Activated CD4-positive, alpha-beta T cell treated with anti-CD3 and anti-CD28 coated beads for 36 hours (primary cell): ENCODE measurements at regions of chr2 and their contacts with region 1.

Region 1: DNA sequence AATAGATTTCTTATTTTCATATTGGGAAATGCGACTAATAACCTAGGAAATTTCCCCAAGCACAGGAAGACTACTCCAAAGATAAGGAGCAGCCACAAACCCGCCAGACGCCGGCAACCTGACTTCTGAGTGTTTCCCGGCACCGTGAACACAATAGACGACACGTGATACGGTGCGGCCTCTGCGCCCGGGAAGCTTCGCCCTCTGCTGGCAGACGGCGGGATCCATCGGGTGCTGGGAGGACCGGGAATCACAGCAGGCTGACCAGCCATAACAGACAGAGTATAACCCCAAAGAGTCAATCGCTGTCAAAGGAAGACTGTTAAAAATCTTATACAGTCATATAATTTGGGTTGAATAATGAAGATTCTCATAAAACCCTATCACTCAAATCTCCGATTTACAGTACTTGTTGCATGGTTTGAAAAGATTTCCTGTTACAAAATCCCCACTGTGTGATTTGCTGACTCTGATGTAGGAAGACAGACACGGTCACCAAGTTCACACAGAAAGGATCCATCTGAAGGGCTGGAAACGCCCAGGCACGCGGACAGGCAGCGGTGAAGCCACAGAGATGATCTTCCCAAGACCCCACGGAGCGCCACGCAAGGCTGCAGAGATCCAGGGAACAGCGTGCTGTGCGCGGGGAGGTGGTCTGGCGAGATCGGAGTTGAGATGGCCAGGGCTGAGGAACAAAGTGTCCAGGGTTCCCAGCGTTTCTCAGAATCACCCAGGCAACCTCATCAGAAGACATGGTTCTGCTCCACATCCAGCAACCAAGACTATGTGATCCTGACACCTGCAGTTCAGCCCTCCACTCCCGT is 73.8 kb downstream of the EIPR1 start:
- DNase-seq: peak; percentile 90
- ATAC-seq: peak; percentile 100
- H3K4me3 Mint-ChIP-seq: no peak overlapping the region
- H3K27ac Mint-ChIP-seq: peak overlapping the region; percentile 64
- H3K4me1 Mint-ChIP-seq: peaks cover 8% of the 10 kb centered on the region
- H3K27me3 Mint-ChIP-seq: no peaks in the 10 kb centered on the region

Region 2: DNA sequence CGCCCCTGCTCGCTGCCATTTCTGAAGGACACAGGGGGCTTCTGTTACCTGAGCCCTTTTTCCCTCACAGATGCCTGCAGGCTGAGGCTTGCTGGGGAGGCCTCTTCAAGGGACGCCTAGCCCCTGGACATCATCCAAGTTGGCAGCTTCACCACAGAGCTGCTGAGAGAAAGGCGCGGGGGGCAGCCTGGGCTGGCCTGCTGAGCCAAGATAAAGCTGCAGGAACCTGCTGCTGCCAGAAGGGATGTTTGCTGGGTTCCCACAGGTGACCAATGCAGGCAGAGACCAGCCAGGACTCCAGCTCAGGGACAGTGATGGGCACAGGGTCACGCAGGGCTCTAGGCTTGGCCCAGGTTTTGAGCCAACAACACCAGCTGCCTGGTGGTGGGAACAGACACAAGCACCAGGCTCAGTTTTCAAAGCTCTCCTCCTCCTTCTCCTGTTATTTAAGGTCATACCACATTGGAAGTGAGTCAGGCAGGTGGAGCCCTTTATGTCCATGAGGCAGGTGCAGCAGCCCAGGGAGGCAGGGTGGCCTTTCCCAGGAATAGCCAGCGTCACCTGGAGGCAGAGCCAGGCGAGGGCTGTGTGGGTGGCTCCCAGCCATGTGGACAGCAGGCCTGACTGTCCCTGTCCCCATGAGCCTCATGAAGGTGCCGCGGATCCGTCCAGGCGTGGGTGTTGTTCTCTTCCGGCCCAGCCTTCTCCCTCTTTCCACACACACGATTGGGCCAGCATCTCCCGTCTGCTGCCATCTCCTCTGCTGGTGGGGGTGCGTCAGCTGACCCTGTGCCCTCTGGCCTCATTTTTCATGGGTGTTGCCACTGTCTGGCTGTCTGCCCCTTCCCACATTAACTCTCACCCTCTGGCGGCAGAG is 457.2 kb before region 1 on chr2:
- CTCF ChIA-PET with region 1: no interaction called
- POLR2A ChIA-PET with region 1: no interaction called
- intact Hi-C with region 1: loop called in 1 of 2 experiments (anchors 10 kb)
- DNase-seq: no peak
- ATAC-seq: no peak
- H3K4me3 Mint-ChIP-seq: no peak overlapping the region
- H3K27ac Mint-ChIP-seq: no peak overlapping the region
- H3K4me1 Mint-ChIP-seq: no peaks in the 10 kb centered on the region
- H3K27me3 Mint-ChIP-seq: no peaks in the 10 kb centered on the region

Region 3: DNA sequence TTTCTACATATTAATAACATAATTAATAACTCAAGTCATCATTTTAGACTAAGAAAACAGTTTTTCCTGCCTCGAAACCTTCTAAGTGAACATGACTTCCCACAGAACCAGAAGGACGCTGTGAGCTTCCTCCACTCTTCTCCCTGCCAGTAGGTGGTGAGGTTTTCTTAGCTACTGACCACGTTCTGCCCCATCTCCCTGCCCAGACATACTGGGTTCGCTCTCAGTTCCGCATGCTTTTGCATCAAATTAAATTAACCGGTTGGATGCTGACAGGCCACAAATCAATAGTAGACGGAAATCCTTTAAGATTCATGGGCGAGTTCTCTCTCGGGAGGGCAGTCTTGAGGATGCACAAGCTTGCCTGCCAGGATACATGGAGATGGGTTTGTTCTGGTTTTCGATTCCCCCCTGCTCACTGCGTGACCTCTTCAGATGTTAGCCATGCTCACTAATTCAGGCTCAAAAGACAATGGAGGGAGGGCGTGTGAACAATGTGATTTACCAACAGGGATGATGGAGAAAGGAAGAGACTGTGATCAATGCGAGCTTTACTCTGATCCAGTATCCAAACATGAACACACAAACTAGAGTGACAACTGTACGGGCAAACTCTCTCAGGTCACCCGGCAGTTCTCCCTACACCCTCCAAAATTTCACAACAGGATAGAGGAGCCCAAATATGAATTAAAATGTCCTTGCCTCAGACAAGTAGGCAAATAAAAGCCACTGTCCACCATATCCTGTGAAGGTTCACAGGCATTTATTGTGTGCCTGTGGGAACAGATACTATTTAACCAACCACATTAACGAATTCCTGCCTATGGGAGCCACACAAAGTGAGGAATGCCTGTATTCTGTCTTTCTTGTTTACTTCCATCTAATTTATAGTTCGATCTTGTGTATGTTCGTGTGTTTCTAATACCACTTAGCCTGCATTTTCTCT is 301.9 kb before region 1 on chr2:
- CTCF ChIA-PET with region 1: interaction called, 3 read pairs
- POLR2A ChIA-PET with region 1: no interaction called
- intact Hi-C with region 1: loop called in 1 of 2 experiments (anchors 5 kb)
- DNase-seq: no peak
- ATAC-seq: no peak
- H3K4me3 Mint-ChIP-seq: no peak overlapping the region
- H3K27ac Mint-ChIP-seq: no peak overlapping the region
- H3K4me1 Mint-ChIP-seq: peaks cover 4% of the 10 kb centered on the region
- H3K27me3 Mint-ChIP-seq: peaks cover 16% of the 10 kb centered on the region

Region 4: GRCh38 chr2:3179208-3179607 is 124.6 kb before region 1 on chr2:
- CTCF ChIA-PET with region 1: no interaction called
- POLR2A ChIA-PET with region 1: no interaction called
- intact Hi-C with region 1: loop called (anchors 1 kb)
- DNase-seq: peak; percentile 66
- ATAC-seq: peak; percentile 65
- H3K4me3 Mint-ChIP-seq: no peak overlapping the region
- H3K27ac Mint-ChIP-seq: no peak overlapping the region
- H3K4me1 Mint-ChIP-seq: no peaks in the 10 kb centered on the region
- H3K27me3 Mint-ChIP-seq: no peaks in the 10 kb centered on the region

Region 5: DNA sequence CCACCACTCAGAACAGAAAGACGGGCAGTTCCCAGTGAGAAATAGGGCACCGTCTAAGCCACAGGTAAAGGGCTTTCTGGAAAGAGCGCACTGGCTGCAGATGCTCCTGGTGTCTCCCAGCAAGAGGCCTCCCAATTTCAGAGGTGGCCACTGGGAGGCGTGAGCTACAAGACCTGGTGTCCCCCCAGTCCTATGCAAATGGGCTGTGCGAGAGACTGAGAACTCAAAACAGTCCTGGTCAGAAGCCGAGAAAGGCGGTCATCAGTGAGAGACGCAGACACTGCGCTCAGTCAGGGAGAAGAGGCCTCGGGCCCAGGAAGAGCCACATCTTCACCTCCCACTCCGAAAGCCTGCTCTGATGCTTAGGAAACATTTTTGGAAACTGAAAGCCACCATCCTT is 105.7 kb before region 1 on chr2:
- CTCF ChIA-PET with region 1: no interaction called
- POLR2A ChIA-PET with region 1: no interaction called
- intact Hi-C with region 1: loop called (anchors 1 to 2 kb)
- DNase-seq: peak; percentile 59
- ATAC-seq: peak; percentile 71
- H3K4me3 Mint-ChIP-seq: no peak overlapping the region
- H3K27ac Mint-ChIP-seq: peak overlapping the region; percentile 37
- H3K4me1 Mint-ChIP-seq: peaks cover 4% of the 10 kb centered on the region
- H3K27me3 Mint-ChIP-seq: no peaks in the 10 kb centered on the region